Left cardiac atrium (tissue), 4 donors: ENCODE measurements at regions of chr20 and their contacts with region 1.

Region 1: GRCh38 chr20:44388466-44389023 is 33.0 kb downstream of the HNF4A start:
- DNase-seq: peak; percentile 69
- ATAC-seq: peak; percentile 64 to 86

Region 2: DNA sequence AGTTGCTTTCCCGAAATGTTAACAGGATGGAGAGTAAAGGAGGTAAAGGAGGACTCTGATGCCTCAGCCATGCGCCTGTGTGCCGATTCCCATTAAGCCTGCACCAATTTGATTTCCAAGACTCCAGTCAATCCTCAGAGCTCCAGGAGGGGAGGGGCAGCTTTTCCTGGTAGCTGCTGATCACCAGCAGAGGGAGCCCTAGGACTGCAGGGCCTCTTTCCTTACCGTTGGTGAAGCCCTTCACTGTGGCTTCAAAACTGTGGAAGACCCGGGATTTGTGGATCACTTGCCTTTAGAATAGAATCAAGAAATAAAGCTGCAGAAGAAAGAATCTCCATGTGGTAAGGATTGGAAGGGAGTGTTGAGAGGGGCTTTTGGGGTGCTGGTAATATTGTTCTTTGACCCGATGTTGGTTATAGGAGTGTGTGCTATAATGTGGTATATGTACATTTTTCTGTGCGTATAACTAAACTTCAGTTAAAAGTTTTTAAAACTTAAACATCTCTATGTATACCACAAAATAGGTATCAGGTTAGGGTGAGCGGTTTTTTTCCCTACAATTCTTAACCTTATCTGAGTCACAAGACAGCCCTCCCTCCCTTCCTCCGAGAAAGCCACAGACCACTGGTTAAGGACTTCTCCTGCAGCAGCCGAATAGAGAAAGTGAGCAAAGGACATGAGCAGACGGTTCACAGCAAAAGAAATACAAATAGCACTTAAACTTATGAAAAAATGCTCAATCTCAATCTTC is 171.0 kb before region 1 on chr20:
- intact Hi-C with region 1: loop called (anchors 2 to 5 kb)
- DNase-seq: peak; percentile 71
- ATAC-seq: peak; percentile 68 to 77

Region 3: DNA sequence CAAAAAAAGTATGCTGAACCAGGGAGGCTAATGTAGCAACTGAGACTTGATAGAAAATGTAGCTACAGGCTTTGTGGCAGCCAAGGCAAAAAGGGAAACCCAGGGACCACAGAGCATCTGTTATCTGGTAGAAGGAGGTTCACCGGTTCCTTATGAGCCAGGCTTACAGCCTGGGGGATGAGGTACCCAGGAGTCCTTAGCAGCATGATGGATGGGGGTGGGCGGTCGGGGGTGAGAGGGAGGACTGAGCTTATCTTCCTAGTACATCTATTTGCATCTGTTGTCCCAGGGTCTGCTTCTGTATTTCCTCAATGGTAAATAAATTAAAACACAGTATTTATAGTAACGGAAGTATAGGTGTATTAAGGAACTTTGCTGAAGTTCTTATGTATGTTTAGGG is 142.6 kb before region 1 on chr20:
- intact Hi-C with region 1: no loop called
- DNase-seq: no peak
- ATAC-seq: no peak

Region 4: GRCh38 chr20:44310664-44311639 is 77.6 kb before region 1 on chr20 and contains the start of gene FITM2:
- intact Hi-C with region 1: loop called in 1 of 2 experiments (anchors 10 kb)
- DNase-seq: peak; percentile 99
- ATAC-seq: peak; percentile 91 to 93
- total RNA-seq, gene FITM2: 97.7 to 124 TPM

Region 5: DNA sequence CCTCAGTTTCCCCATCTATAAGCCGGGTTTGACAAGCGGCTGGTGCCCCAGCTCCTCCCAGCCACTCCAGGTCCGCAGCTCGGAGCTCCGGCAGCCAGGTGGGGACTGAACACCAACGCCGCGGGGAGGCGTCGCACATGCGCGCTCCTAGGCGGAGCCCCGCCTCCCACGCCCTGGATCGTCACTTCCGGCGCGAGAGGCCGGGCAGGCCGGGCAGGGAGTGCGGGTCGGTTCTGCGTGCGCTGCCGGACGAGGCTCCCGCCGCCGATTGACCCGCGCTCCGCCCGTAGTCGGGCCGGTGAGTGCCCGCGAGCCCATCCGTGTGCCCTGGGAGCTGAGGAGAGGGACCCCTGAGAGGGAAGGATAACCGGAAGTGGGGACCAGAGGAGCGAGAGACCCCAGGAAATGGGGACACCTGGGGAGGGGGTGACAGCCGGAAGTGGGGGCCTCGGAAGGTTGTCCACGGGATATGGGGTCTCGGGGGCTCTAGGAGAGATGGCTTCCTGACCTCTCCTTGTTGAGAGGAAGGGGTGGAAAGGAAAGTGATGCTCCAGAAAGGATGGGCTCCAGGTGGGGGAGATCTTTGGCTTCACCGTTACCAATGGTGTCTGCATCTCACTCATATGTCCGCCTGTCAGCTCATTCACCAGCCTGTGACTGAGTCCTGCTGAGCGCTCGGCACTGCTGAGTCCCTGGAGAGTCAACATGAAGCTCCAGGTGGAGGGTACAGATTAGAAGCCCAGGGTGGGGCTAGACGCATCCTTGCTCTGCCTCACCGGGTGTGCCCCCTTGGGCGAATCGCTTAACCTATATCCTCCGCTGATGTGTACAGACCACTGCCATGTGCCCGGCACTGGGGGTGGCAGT is 87.4 kb after region 1 on chr20 and contains the start of gene TTPAL:
- intact Hi-C with region 1: loop called in 1 of 2 experiments (anchors 2 kb)
- DNase-seq: peak; percentile 92
- ATAC-seq: peak; percentile 99
- total RNA-seq, gene TTPAL: 7.2 to 7.6 TPM

Region 6: GRCh38 chr20:44609511-44610312 is 221.2 kb after region 1 on chr20:
- intact Hi-C with region 1: loop called in 1 of 2 experiments (anchors 2 kb)
- DNase-seq: peak; percentile 90
- ATAC-seq: peak; percentile 93 to 94